BJ (cell line): ENCODE measurements at regions of chr1 and their contacts with region 1.

Region 1: DNA sequence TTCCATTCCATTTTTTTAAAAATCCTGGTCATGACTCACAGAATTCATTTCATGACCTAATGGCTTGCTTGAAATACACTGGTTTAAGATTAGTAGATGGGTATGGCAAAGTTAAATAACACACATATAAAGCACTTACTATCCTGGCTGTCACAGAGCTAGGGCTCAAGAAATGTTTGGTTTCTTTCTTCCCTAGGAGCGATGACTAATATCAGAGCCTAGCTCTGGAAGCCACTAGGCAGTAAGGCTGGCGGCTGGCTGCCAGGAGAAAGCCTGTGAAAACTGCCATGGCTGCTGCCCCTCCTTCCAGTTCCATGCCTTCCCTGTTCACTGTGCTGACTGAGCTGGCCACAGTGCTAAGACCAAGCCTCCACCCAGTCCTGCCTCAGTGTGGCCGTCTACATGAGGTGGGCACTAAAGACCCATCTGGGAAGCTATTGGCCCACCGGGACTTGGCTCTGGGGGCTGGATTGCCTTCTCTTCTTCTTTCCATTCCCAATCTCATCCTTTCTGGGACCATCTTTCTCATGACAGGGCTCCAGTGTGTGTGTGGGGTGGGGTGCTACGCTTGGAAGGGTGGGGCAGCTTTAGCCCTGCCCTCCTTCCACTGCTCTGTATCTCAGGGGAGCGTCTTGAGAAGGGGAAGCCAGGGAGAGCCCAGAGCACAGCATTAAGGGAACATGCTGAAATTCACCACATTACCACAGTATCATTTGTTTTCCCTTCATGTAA is 10.8 kb upstream of the ASCL5 start:
- DNase-seq: peak; percentile 79
- H3K4me3 ChIP-seq: no peak overlapping the region
- H3K27me3 ChIP-seq: no peaks in the 10 kb centered on the region
- CTCF ChIP-seq: no peak

Region 2: GRCh38 chr1:201149400-201149799 is 11.7 kb after region 1 on chr1:
- CTCF ChIA-PET with region 1: interaction called, 12 read pairs
- POLR2A ChIA-PET with region 1: no interaction called
- DNase-seq: no peak
- H3K4me3 ChIP-seq: no peak overlapping the region
- H3K27me3 ChIP-seq: no peaks in the 10 kb centered on the region
- CTCF ChIP-seq: peak; percentile 41